MCF 10A (cell line): ENCODE measurements at regions of chr18 and their contacts with region 1.

Region 1: DNA sequence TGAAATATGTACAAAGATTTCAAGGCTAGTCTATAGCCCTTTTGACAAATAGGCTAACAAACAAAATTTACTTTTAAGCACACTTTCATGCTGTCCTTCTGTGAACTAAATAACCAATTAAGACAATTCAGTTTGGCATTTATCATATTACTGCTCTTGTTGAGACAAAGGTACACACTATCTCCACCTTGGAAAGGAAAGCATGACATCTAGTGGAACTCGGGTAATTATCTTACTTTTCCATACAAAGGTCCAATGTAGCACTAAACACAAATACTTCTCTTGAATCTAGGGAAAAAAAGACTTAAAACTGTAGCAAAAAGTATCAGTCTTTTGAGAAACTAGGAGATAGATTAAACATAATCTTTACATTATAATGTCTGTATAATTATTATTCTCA is 125.0 kb upstream of the CD226 start:
- DNase-seq: peak; percentile 28
- H3K4me3 Mint-ChIP-seq: no peak overlapping the region
- H3K27ac Mint-ChIP-seq: no peak overlapping the region
- H3K4me1 Mint-ChIP-seq: no peaks in the 10 kb centered on the region
- H3K27me3 Mint-ChIP-seq: no peaks in the 10 kb centered on the region
- CTCF ChIP-seq: peak; percentile 48

Region 2: DNA sequence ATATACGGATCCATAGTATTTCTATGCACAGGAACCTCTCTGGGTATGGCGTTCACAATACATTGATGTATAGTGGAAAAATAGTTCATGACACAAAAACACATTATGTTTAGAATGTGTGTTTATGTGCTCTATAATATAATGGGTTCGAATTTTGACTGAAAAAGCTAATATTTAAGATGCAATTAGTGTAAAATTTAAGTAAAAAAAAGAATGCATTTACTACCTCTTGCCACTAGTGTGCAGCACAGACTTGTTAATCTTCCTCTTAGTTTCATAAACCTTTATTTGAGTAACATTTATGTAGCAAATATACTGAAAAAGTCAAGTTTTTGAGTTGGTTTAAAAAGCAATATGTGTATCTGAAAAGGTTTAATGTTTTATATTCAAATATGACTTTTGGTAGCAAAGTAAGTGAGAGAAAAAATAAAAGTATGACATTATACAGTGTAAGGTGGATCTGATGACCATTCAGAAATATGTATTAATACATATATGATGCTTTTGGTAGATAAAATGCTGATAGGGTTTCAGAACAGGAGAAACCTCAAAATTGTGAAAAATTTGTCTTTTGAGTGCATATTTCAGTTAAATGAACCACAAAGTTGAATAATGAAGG is 1225.3 kb before region 1 on chr18:
- CTCF ChIA-PET with region 1: interaction called, 4 read pairs
- POLR2A ChIA-PET with region 1: no interaction called
- intact Hi-C with region 1: loop called (anchors 5 kb)
- DNase-seq: peak; percentile 25
- H3K4me3 Mint-ChIP-seq: no peak overlapping the region
- H3K27ac Mint-ChIP-seq: no peak overlapping the region
- H3K4me1 Mint-ChIP-seq: no peaks in the 10 kb centered on the region
- H3K27me3 Mint-ChIP-seq: no peaks in the 10 kb centered on the region
- CTCF ChIP-seq: peak; percentile 61

Region 3: DNA sequence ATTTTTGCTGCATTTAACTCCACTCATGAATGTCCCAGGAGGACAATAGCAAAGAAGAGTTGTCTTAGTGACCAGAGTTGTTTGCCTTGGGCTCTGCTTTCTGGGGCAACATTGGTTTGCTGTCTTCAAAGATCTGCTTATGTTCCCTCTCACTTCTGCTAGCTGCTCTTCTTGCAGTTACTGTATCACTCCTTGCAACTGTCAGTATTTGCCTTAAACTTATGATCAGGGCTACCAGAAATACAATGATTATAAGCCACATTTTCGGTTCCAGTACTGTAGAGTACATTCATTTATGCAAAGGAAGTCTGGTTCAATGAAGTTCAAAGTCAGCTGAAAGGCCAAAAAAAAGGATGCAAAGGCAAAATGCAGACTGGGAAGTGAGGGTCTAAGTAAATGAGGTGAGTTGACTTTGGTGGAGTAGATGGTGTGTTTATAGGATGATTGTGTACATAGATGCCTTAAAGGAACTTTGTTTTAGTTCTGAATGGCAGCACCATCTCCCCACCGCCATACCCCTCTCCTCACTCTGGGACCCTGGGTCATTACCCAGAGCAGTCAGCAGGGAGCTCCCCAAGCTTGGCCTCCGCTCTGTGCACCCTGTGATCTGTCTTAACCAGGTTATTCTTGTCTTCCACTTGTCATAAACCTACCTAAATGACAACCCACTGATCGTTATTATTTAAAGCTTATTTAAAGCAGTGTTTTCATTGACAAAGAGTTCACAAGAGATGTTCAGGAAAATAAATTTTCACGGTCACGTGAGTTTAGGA is 436.0 kb before region 1 on chr18:
- CTCF ChIA-PET with region 1: no interaction called
- POLR2A ChIA-PET with region 1: no interaction called
- intact Hi-C with region 1: loop called (anchors 5 kb)
- DNase-seq: no peak
- H3K4me3 Mint-ChIP-seq: no peak overlapping the region
- H3K27ac Mint-ChIP-seq: no peak overlapping the region
- H3K4me1 Mint-ChIP-seq: no peaks in the 10 kb centered on the region
- H3K27me3 Mint-ChIP-seq: peaks cover 75% of the 10 kb centered on the region
- CTCF ChIP-seq: no peak

Region 4: DNA sequence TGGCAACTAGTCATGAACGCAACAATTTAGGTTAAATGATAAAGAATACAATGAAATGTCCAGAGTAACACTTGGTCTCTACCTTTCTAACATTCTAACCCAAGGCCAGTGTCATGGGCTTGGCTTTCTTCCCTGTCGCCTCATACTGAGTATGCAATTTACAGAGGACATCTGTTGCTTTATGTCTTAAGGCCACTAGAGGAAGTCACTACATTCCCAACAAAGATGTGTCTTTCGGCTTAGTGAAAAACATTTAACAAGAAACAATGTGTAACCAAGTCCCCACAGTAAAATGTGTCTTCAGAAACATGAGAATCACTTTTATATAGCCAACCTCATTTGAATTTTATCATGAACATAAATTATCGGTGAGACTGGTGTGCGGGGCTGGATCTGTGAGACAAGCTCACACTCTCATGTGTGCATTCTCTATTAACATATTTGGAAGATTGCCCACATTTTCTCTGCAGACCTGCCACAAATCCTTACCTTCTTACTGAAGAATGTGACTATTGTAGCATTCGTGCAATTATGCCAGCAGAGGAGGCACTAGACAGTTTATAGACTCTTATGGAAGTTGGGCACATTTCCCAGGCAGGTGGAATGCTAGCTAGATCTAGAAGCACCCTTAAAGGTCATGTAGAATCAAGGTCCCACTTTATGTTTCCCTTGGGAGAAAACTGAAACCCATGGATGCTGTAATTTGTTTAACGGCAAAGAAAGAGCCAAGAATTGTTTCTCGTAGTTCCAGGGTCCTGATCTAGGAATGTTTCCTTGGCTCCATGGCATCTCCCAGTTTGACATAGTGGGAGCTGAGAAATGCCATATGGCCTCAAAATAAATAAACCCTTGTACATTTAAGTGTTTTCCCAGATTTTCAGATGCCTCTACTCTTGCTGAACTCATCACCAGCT is 226.8 kb before region 1 on chr18:
- CTCF ChIA-PET with region 1: no interaction called
- POLR2A ChIA-PET with region 1: no interaction called
- intact Hi-C with region 1: loop called (anchors 10 kb)
- DNase-seq: no peak
- H3K4me3 Mint-ChIP-seq: no peak overlapping the region
- H3K27ac Mint-ChIP-seq: no peak overlapping the region
- H3K4me1 Mint-ChIP-seq: peaks cover 6% of the 10 kb centered on the region
- H3K27me3 Mint-ChIP-seq: peaks cover 11% of the 10 kb centered on the region
- CTCF ChIP-seq: no peak

Region 5: DNA sequence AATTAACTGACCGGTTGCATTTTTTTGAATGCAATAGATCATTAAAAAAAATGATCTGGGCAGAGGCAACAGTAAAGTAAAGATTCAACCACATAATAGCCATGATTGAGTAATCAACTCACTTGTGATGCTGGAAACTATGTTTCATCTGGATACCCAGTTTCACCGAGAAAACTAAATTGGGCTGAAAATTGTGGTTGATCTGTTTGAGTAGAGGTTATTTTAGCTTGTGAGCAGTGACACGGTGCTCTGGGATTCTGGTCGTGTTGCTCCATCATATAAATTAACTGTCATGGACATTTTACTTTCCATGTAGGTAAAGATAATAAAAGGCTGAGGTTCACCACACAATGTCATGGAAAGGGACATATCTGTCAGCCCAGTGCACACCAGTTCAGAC is 183.7 kb before region 1 on chr18:
- CTCF ChIA-PET with region 1: no interaction called
- POLR2A ChIA-PET with region 1: no interaction called
- intact Hi-C with region 1: no loop called
- DNase-seq: no peak
- H3K4me3 Mint-ChIP-seq: no peak overlapping the region
- H3K27ac Mint-ChIP-seq: no peak overlapping the region
- H3K4me1 Mint-ChIP-seq: no peaks in the 10 kb centered on the region
- H3K27me3 Mint-ChIP-seq: no peaks in the 10 kb centered on the region
- CTCF ChIP-seq: no peak

Region 6: GRCh38 chr18:69900941-69901340 is 171.7 kb before region 1 on chr18:
- CTCF ChIA-PET with region 1: no interaction called
- POLR2A ChIA-PET with region 1: no interaction called
- intact Hi-C with region 1: no loop called
- DNase-seq: no peak
- H3K4me3 Mint-ChIP-seq: no peak overlapping the region
- H3K27ac Mint-ChIP-seq: no peak overlapping the region
- H3K4me1 Mint-ChIP-seq: no peaks in the 10 kb centered on the region
- H3K27me3 Mint-ChIP-seq: no peaks in the 10 kb centered on the region
- CTCF ChIP-seq: peak; percentile 10